Psoas muscle (tissue), 8 donors: ENCODE measurements at regions of chr3 and their contacts with region 1.

Region 1: GRCh38 chr3:149657926-149658733 is at the start of gene WWTR1:
- DNase-seq: peak; percentile 91 to 92
- ATAC-seq: peak; percentile 86 to 88 (median 87)
- H3K4me3 ChIP-seq: peak within 1 kb of the TSS; percentile 86
- H3K27ac ChIP-seq: peak within 1 kb of the TSS; percentile 90
- H3K4me1 ChIP-seq: peaks cover 23% of the 10 kb centered on the region
- H3K27me3 ChIP-seq: no peaks in the 10 kb centered on the region
- CTCF ChIP-seq: peak; percentile 24
- total RNA-seq, gene WWTR1: 13.3 to 52.9 (median 30.1) TPM

Region 2: GRCh38 chr3:149536429-149536828 is 121.7 kb before region 1 on chr3:
- intact Hi-C with region 1: loop called (anchors 5 to 10 kb)
- DNase-seq: peak; percentile 50 to 74
- ATAC-seq: peak; percentile 47 to 83 (median 68)
- H3K4me3 ChIP-seq: peak overlapping the region; percentile 46
- H3K27ac ChIP-seq: peak overlapping the region; percentile 52
- H3K4me1 ChIP-seq: peaks cover 36% of the 10 kb centered on the region
- H3K27me3 ChIP-seq: no peaks in the 10 kb centered on the region
- CTCF ChIP-seq: no peak

Region 3: GRCh38 chr3:149575961-149576564 is 82.1 kb before region 1 on chr3:
- intact Hi-C with region 1: loop called in 1 of 2 experiments (anchors 5 kb)
- DNase-seq: peak in 1 of 2 donors; percentile 16
- ATAC-seq: peak; percentile 79 to 85 (median 80)
- H3K4me3 ChIP-seq: peak overlapping the region; percentile 6
- H3K27ac ChIP-seq: peak overlapping the region; percentile 88
- H3K4me1 ChIP-seq: peaks cover 93% of the 10 kb centered on the region
- H3K27me3 ChIP-seq: no peaks in the 10 kb centered on the region
- CTCF ChIP-seq: no peak

Region 4: DNA sequence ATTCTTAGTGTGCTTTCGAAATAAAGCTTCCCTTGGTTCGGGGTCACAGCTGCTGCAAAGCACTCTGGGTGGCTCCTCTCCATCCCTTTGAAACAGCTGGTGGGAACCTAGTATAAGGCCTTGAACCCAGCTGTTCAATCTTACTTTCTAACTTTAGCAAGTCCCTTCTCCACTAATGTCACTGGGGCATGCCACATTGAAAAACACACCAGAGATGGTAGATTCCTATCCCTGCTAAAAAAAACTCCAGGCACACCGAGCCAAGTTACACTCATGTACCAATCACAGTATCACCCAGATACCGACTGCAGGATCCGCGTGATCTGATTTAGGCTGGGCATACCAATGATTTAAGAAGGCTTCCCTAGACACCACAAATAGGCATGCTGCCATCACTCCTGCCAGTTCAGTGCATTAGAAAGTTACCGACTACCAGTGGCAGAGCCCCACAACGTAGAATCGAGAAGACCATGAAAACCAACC is 65.3 kb before region 1 on chr3:
- intact Hi-C with region 1: loop called (anchors 5 kb)
- DNase-seq: peak; percentile 31 to 71
- ATAC-seq: peak; percentile 95 to 97 (median 96)
- H3K4me3 ChIP-seq: peak overlapping the region; percentile 48
- H3K27ac ChIP-seq: peak overlapping the region; percentile 83
- H3K4me1 ChIP-seq: peaks cover 61% of the 10 kb centered on the region
- H3K27me3 ChIP-seq: no peaks in the 10 kb centered on the region
- CTCF ChIP-seq: no peak

Region 5: GRCh38 chr3:149717391-149718056 is 59.4 kb after region 1 on chr3:
- intact Hi-C with region 1: loop called in 1 of 2 experiments (anchors 5 kb)
- DNase-seq: no peak
- ATAC-seq: peak; percentile 55 to 74 (median 70)
- H3K4me3 ChIP-seq: no peak overlapping the region
- H3K27ac ChIP-seq: no peak overlapping the region
- H3K4me1 ChIP-seq: no peaks in the 10 kb centered on the region
- H3K27me3 ChIP-seq: no peaks in the 10 kb centered on the region
- CTCF ChIP-seq: peak; percentile 82